ENCODE measurements at regions of chr17 and their contacts with region 1.

Region 1: DNA sequence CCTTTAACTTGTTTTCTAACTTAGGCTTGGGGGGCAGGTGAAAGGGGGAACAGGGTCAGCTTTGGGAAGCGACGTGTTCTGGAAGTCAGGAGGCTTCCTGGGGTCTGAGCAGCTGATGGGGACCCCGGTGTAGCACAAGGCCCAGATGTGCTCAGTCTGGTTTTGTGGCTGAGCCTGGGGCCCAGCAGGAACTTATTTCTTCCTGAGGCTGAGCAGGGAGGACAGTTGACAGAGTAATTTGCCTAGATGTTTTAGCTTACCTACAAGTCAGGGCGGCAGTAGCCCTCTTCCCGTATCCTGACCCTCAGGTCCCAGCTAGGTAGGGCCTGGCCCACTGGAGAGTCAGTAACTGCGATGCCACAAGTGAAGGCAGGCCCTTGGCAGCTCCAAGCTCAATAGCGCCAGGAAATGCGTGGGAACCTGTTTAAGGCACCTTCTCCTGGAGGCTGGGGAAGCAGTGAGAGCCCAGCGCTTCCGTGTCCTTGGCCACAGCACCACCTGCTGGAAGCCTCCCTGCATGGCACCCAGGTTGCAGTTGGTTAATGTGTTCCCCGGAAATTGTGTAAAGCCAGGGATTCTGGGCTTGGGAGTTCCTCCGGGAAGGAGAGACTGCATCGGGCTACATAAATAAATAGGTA is 5.2 kb downstream of the CCR7 start:
- DNase-seq: peak; percentile 69 to 91 (median 84)
- ATAC-seq: peak; percentile 12 to 27
- H3K4me3 Mint-ChIP-seq: peak overlapping the region; percentile 91 to 100 (median 97)
- H3K27ac Mint-ChIP-seq: peak overlapping the region; percentile 95 to 100 (median 100)
- H3K4me1 Mint-ChIP-seq: peaks cover 53 to 95% (median 75%) of the 10 kb centered on the region in 4 donors
- H3K27me3 Mint-ChIP-seq: no peaks in the 10 kb centered on the region

Region 2: DNA sequence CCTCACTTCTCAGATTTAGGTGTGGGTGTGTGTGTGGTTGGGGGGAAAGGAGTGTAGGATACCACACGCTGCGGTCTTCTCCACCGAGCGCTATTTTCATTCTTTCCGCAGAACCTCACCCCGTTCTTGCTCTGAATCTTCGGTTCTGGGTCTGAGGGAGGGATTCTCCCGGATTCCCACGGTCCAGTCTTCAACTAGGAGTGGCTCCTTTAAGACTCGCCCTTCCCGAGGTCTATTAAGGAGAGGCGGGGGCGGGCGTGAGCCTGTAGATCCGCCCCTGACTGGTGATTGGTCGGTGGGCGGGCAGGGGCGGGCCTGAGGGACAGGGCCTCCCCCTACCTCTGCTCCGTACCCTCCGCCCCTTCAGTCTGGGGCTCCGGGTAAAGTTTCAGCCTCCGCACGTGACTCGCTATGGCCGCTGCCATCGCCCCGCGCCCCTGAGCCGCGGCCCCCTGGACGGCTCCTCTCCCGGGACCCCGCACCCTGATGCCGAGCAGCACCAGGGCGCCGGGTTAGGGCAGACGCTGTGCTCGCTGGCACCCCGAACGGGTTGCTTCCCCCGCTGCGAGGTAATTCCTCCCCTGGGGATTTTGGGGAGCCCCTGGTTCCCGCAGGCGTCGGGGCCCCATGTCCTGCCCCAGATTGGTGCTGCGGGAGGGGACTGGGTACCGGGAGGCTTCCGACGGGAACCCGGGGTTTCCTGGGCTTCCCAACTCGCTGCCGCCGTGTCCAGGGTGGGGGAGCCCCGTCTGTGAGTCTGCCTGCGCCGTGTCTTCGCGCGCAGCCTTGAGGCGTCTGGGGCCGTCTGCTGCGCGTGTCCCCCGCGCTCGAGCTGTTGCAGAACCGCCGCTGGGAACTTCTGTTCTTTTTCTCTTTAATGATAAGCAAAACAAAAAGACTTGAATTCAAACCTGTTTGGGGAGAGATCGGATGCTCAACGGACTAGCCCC is 241.9 kb before region 1 on chr17:
- POLR2A ChIA-PET with region 1: interaction called, 10 read pairs
- DNase-seq: peak; percentile 85 to 94 (median 89)
- ATAC-seq: peak; percentile 53 to 64
- H3K4me3 Mint-ChIP-seq: peak overlapping the region; percentile 83 to 97 (median 96)
- H3K27ac Mint-ChIP-seq: peak overlapping the region; percentile 98 to 100 (median 100)
- H3K4me1 Mint-ChIP-seq: peaks cover 52 to 79% (median 65%) of the 10 kb centered on the region in 4 donors
- H3K27me3 Mint-ChIP-seq: peaks cover 0 to 6% (median 0%) of the 10 kb centered on the region in 5 donors

Region 3: DNA sequence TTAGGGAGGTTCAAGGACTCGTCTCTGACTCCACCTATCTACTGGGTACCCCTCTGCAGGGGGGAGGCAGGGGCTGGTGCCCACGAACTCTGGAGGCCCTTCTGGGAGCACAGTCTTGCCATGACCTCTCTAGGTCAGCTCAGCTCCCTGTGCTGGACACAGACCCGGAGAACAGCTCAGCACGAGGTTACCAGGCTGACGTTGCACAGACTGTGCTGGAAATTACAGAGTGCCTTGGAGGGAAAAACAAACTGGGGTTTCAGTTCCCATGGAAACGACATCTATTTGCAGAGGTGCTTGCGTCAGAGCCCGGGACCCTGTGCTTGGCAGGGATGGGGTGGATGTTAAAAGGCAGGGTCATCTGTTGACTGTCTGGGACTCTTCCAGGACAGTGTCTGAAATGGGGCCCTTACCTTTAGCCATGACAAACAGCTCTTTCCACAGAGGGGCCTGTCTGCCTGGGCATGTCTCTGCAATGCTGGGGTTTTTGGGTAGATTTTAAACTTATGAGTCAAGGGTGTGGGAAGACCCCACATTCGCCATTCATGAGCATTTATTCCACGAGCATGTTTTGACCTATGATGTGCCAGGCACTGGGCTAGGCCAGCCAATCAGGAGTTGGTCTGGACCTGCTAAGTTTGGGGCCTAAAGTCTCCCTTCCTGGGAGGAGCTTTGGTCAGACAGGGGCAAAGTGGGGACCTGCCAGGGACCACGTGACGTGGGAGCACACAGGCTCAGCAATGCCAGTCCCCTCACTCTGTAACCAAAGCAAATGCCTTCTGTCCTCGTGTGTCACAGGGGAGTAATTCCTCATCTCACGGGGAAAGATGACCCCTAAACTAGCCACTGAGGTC is 17.3 kb before region 1 on chr17:
- POLR2A ChIA-PET with region 1: interaction called, 1,289 read pairs
- DNase-seq: peak in 3 of 10 donors; percentile 12 to 64 (median 47)
- ATAC-seq: no peak
- H3K4me3 Mint-ChIP-seq: peak overlapping the region; percentile 49 to 91 (median 77)
- H3K27ac Mint-ChIP-seq: peak overlapping the region; percentile 90 to 99 (median 96)
- H3K4me1 Mint-ChIP-seq: peaks cover 51 to 93% (median 87%) of the 10 kb centered on the region in 4 donors
- H3K27me3 Mint-ChIP-seq: peaks cover 0 to 2% (median 0%) of the 10 kb centered on the region in 5 donors

Region 4: GRCh38 chr17:40582328-40582901 is 22.3 kb after region 1 on chr17:
- POLR2A ChIA-PET with region 1: interaction called, 481 read pairs
- DNase-seq: peak; percentile 56 to 93 (median 80)
- ATAC-seq: peak; percentile 84 to 92
- H3K4me3 Mint-ChIP-seq: peak overlapping the region; percentile 52 to 87 (median 72)
- H3K27ac Mint-ChIP-seq: peak overlapping the region; percentile 88 to 99 (median 97)
- H3K4me1 Mint-ChIP-seq: peaks cover 59 to 96% (median 94%) of the 10 kb centered on the region in 4 donors
- H3K27me3 Mint-ChIP-seq: no peaks in the 10 kb centered on the region

Region 5: GRCh38 chr17:40615295-40615988 is 55.4 kb after region 1 on chr17:
- POLR2A ChIA-PET with region 1: interaction called, 2,269 read pairs
- DNase-seq: peak in 9 of 10 donors; percentile 48 to 81 (median 67)
- ATAC-seq: peak; percentile 59
- H3K4me3 Mint-ChIP-seq: peak overlapping the region; percentile 67 to 90 (median 85)
- H3K27ac Mint-ChIP-seq: peak overlapping the region; percentile 93 to 100 (median 98)
- H3K4me1 Mint-ChIP-seq: peaks cover 35 to 81% (median 81%) of the 10 kb centered on the region in 4 donors
- H3K27me3 Mint-ChIP-seq: no peaks in the 10 kb centered on the region

Region 6: GRCh38 chr17:40647624-40648383 is 87.7 kb after region 1 on chr17 and contains the start of gene SMARCE1:
- POLR2A ChIA-PET with region 1: interaction called, 46 read pairs
- DNase-seq: peak; percentile 48 to 90 (median 68)
- ATAC-seq: peak; percentile 74 to 81
- H3K4me3 Mint-ChIP-seq: peak within 1 kb of the TSS; percentile 89 to 99 (median 95)
- H3K27ac Mint-ChIP-seq: peak within 1 kb of the TSS; percentile 94 to 100 (median 98)
- H3K4me1 Mint-ChIP-seq: peaks cover 13 to 59% (median 45%) of the 10 kb centered on the region in 4 donors
- H3K27me3 Mint-ChIP-seq: no peaks in the 10 kb centered on the region
- polyA plus RNA-seq, gene SMARCE1: 195 to 229 (median 220) TPM

Region 7: DNA sequence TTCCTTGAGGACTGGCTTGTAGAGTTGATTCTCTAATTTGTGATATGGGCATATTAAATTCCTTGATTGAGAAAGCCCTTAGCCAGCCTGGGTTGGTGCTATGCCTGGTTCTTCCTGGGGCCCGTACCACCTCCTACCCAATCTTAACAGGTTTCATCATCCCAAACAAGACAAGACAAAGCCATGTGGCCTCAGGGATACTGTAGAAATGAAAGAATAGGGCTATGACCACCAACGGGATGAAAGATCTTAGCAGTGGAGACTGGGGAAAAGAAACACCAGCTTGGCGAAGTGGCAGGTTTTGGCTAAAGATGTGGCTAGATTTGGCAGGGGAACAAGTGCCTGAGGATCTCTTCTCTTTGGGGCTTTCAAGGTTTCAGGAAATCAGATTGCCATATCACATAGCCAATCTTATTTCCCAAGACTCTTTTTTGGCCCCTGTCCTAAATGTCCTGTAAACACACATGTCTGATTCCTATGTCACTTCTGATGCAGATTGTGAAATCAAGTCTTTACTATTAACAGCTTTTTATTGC is 136.5 kb after region 1 on chr17:
- POLR2A ChIA-PET with region 1: no interaction called
- DNase-seq: no peak
- ATAC-seq: no peak
- H3K4me3 Mint-ChIP-seq: no peak overlapping the region
- H3K27ac Mint-ChIP-seq: no peak overlapping the region
- H3K4me1 Mint-ChIP-seq: no peaks in the 10 kb centered on the region
- H3K27me3 Mint-ChIP-seq: peaks cover 1 to 43% (median 9%) of the 10 kb centered on the region in 5 donors

Measured in naive thymus-derived CD8-positive, alpha-beta T cell (primary cell).